ENCODE measurements at regions of chr4 and their contacts with region 1.

Region 1: DNA sequence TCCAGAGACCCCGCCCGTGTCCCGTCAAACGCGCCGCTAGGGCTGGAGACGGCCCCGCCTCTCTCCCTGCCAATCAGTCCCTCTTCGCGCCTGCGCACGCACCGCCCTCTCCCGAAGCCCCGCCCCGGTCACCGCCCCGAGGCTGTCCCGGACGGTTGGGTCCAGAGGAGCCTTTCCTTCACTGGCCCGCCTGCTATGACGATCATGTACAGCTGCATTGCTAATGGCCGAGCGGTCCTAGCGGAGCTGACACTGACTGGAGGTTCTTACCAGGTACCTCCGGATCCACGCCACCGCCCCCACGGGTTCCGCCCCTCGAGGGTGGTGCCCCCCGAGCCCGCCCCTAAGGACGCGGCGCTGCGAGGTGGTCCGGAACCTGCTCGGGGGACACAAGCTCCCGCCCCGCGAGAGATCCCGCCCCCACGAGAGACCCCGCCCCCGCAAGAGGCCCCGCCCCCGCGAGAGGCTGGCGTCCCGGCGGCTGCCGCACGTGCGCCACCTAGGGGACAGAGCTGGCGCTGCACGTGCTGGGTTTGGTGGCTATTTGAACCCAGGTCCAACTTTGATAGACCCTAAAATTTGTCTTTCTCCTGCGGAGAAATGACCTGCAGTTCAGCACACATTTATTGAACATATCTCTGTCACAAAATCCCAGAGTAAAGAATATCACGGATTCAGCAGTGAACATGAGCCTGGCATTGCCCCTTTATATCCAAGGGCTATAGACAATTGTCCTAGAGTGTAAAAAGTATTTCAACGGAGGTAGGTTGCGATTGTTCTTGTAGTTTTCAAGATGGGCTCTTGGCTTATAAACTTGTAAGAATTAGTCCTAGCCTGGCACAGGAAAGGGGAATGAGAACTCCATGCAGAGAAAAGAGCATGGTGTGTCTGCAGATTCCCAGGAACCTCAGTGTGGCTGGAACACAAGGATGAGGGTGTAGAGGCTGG is 88.7 kb downstream of the HNRNPD start:
- DNase-seq: peak; percentile 100
- H3K4me3 Mint-ChIP-seq: peak overlapping the region; percentile 73
- H3K27ac Mint-ChIP-seq: no peak overlapping the region
- H3K4me1 Mint-ChIP-seq: peaks cover 12% of the 10 kb centered on the region
- H3K27me3 Mint-ChIP-seq: no peaks in the 10 kb centered on the region

Region 2: DNA sequence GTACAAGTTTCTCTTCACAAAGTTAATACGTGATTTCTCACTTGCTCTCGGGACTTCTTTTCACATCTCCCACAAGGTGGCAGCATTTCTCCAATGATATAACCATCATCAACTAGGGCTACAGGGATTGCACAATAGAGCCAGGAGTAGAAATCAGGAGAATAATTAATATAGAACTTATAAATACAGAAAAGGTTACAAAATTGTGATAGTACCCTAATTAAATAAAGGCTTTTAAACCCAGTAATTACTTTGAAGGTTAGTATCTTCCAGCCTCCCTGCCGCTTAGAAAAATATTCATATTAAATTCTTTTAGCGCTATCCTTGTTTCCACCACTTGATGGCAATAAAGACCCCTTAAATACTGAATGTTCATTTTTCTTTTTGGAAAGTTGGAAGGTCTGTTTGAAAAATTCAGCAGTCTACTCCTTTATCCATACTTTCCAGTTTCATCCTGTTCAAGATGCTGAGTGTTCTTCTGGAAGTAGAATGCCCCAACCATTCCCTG is 879.2 kb before region 1 on chr4:
- CTCF ChIA-PET with region 1: no interaction called
- intact Hi-C with region 1: loop called (anchors 1 kb)
- DNase-seq: peak; percentile 52
- H3K4me3 Mint-ChIP-seq: no peak overlapping the region
- H3K27ac Mint-ChIP-seq: no peak overlapping the region
- H3K4me1 Mint-ChIP-seq: peaks cover 3% of the 10 kb centered on the region
- H3K27me3 Mint-ChIP-seq: no peaks in the 10 kb centered on the region

Region 3: DNA sequence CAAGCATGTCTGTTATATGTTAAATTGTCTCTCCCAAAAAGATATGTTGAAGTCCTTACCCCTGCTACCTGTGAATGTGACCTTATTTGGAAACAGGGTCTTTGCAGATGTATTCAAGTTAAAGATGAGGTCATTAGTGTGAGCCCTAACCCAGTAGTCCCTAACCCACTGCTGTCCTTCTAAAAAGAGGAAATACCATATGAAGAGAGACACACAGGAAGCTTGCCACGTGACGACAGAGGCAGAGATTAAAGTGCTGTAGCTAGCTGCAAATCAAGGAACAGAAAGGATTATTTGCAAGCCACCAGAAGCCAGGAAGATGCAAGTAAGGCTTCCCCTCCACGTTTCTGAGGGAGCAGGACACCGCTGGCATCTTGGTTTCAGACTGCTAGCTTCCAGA is 61.4 kb before region 1 on chr4:
- CTCF ChIA-PET with region 1: no interaction called
- intact Hi-C with region 1: loop called (anchors 1 kb)
- DNase-seq: peak; percentile 51
- H3K4me3 Mint-ChIP-seq: peak overlapping the region; percentile 32
- H3K27ac Mint-ChIP-seq: no peak overlapping the region
- H3K4me1 Mint-ChIP-seq: peaks cover 9% of the 10 kb centered on the region
- H3K27me3 Mint-ChIP-seq: peaks cover 2% of the 10 kb centered on the region

Region 4: GRCh38 chr4:82360298-82361177 is 75.4 kb after region 1 on chr4:
- CTCF ChIA-PET with region 1: interaction called, 5 read pairs
- intact Hi-C with region 1: loop called (anchors 2 kb)
- DNase-seq: no peak
- H3K4me3 Mint-ChIP-seq: no peak overlapping the region
- H3K27ac Mint-ChIP-seq: peak overlapping the region; percentile 31
- H3K4me1 Mint-ChIP-seq: peaks cover 78% of the 10 kb centered on the region
- H3K27me3 Mint-ChIP-seq: no peaks in the 10 kb centered on the region

Region 5: GRCh38 chr4:82415922-82416365 is 130.8 kb after region 1 on chr4:
- CTCF ChIA-PET with region 1: no interaction called
- intact Hi-C with region 1: no loop called
- DNase-seq: no peak
- H3K4me3 Mint-ChIP-seq: peak overlapping the region; percentile 28
- H3K27ac Mint-ChIP-seq: no peak overlapping the region
- H3K4me1 Mint-ChIP-seq: peaks cover 3% of the 10 kb centered on the region
- H3K27me3 Mint-ChIP-seq: peaks cover 21% of the 10 kb centered on the region

Region 6: GRCh38 chr4:82428969-82429727 is 144.0 kb after region 1 on chr4:
- CTCF ChIA-PET with region 1: no interaction called
- intact Hi-C with region 1: loop called (anchors 1 kb)
- DNase-seq: peak; percentile 92
- H3K4me3 Mint-ChIP-seq: peak overlapping the region; percentile 93
- H3K27ac Mint-ChIP-seq: peak overlapping the region; percentile 99
- H3K4me1 Mint-ChIP-seq: peaks cover 64% of the 10 kb centered on the region
- H3K27me3 Mint-ChIP-seq: no peaks in the 10 kb centered on the region

Region 7: GRCh38 chr4:83484500-83485461 is 1199.6 kb after region 1 on chr4 and contains the start of gene ABRAXAS1:
- CTCF ChIA-PET with region 1: no interaction called
- intact Hi-C with region 1: loop called (anchors 10 kb)
- DNase-seq: peak; percentile 92
- H3K4me3 Mint-ChIP-seq: peak within 1 kb of the TSS; percentile 99
- H3K27ac Mint-ChIP-seq: peak within 1 kb of the TSS; percentile 91
- H3K4me1 Mint-ChIP-seq: peaks cover 19% of the 10 kb centered on the region
- H3K27me3 Mint-ChIP-seq: no peaks in the 10 kb centered on the region
- total RNA-seq, gene ABRAXAS1: 19.7 to 20.9 TPM